Ovary (tissue), 10 donors: ENCODE measurements at regions of chr10 and their contacts with region 1.

Region 1: DNA sequence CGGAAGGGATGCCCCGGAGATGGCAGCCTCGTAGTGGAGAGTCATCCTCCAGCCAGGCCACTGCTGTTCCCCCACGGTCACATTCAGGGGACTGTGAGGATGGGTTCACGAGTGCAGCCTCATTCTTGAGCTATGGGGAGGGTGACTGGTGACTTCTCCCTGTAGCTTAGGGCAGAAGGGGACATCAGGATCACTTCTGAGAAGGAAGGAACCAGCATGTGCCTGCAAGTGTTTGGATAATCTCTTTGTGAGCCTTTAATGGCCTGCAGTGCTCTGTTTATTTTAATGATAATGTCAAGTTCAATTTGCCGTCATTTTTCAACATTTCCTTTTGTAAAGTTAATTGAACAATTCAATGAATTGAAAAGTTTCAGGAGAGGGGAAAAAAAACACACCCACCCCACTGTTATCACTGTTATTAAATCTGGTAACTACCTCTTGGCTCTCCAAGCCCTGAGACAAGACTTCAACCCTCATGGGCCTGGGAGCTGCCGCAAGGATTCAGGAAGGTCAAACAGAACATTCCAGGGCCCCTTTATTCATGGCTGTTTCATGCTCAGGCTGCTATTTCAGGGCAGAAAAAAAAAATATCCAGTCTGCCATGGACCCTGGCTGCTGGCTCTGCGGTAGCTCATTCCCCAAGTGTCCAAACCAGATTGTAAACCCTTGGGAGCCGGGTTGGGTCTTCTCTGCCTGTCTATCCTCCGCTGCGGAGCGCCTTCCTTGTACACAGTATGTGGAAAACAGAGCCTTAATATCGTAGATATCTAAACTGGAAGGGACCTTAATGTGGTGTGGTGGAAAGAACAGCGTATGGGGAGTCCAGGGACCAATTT is 100.4 kb downstream of the CDH23 start:
- DNase-seq: no peak
- H3K4me3 ChIP-seq: no peak overlapping the region
- H3K27ac ChIP-seq: no peak overlapping the region
- H3K4me1 ChIP-seq: peaks cover 5% of the 10 kb centered on the region
- H3K27me3 ChIP-seq: no peaks in the 10 kb centered on the region
- CTCF ChIP-seq: no peak
- EP300 ChIP-seq: no peak
- POLR2A ChIP-seq: no peak

Region 2: DNA sequence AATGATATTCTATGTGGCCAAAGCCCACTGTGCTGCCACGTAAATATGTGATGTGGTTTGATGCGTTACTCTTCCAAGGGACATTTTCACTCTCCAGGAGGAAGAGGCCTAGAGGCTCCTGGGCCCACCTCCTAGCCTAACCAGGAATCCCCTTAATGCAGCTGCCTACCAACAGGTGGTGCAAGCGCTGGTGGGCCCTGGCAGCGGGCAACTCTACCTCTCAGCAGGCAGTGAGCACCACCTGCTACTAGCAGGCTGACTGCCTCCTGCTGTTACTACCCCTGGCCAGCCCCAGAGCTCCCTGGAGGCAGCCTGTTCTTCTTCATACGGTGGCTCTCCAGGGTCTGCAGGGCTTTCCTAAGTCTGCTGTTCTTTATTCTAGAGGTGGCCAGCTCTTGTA is 37.6 kb before region 1 on chr10:
- intact Hi-C with region 1: loop called in 1 of 4 experiments (anchors 2 kb)
- DNase-seq: no peak
- H3K4me3 ChIP-seq: no peak overlapping the region
- H3K27ac ChIP-seq: no peak overlapping the region
- H3K4me1 ChIP-seq: no peaks in the 10 kb centered on the region
- H3K27me3 ChIP-seq: no peaks in the 10 kb centered on the region
- CTCF ChIP-seq: no peak
- EP300 ChIP-seq: no peak
- POLR2A ChIP-seq: no peak